B cell (primary cell): ENCODE measurements at regions of chr5 and their contacts with region 1.

Region 1: GRCh38 chr5:41270423-41271251 is 57.3 kb upstream of the C6 start:
- DNase-seq: no peak
- ATAC-seq: no peak
- H3K4me3 ChIP-seq: no peak overlapping the region
- H3K4me3 Mint-ChIP-seq: no peak overlapping the region
- H3K27ac ChIP-seq: no peak overlapping the region
- H3K27ac Mint-ChIP-seq: no peak overlapping the region
- H3K4me1 ChIP-seq: no peaks in the 10 kb centered on the region
- H3K4me1 Mint-ChIP-seq: no peaks in the 10 kb centered on the region
- H3K27me3 ChIP-seq: no peaks in the 10 kb centered on the region
- H3K27me3 Mint-ChIP-seq: no peaks in the 10 kb centered on the region
- CTCF ChIP-seq: peak; percentile 12

Region 2: GRCh38 chr5:41252036-41252435 is 18.6 kb before region 1 on chr5:
- CTCF ChIA-PET with region 1: no interaction called
- POLR2A ChIA-PET with region 1: no interaction called
- intact Hi-C with region 1: no loop called
- DNase-seq: no peak
- ATAC-seq: no peak
- H3K4me3 ChIP-seq: no peak overlapping the region
- H3K4me3 Mint-ChIP-seq: no peak overlapping the region
- H3K27ac ChIP-seq: no peak overlapping the region
- H3K27ac Mint-ChIP-seq: no peak overlapping the region
- H3K4me1 ChIP-seq: no peaks in the 10 kb centered on the region
- H3K4me1 Mint-ChIP-seq: no peaks in the 10 kb centered on the region
- H3K27me3 ChIP-seq: no peaks in the 10 kb centered on the region
- H3K27me3 Mint-ChIP-seq: no peaks in the 10 kb centered on the region
- CTCF ChIP-seq: no peak

Region 3: DNA sequence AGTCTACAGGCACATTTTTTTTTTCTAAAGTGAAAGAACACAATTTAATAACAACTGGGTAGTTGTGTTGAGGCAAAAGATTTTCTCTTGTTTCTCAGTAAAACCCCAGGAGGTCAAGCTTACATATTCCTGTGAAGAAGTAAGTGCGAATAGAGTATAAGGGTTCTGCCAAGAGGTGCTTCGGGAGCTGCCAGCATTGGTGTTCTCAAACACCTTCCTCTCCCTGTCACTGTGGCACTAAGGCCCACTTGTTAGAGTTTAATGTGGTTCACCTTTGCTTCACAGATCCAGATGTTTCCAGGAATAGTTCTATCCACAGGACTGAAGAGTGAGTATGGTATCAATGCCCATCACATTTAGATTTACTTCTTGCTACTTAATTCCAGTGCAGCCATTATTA is 34.4 kb after region 1 on chr5:
- CTCF ChIA-PET with region 1: no interaction called
- POLR2A ChIA-PET with region 1: no interaction called
- intact Hi-C with region 1: no loop called
- DNase-seq: no peak
- ATAC-seq: no peak
- H3K4me3 ChIP-seq: no peak overlapping the region
- H3K4me3 Mint-ChIP-seq: no peak overlapping the region
- H3K27ac ChIP-seq: no peak overlapping the region
- H3K27ac Mint-ChIP-seq: no peak overlapping the region
- H3K4me1 ChIP-seq: no peaks in the 10 kb centered on the region
- H3K4me1 Mint-ChIP-seq: no peaks in the 10 kb centered on the region
- H3K27me3 ChIP-seq: no peaks in the 10 kb centered on the region
- H3K27me3 Mint-ChIP-seq: no peaks in the 10 kb centered on the region
- CTCF ChIP-seq: no peak

Region 4: DNA sequence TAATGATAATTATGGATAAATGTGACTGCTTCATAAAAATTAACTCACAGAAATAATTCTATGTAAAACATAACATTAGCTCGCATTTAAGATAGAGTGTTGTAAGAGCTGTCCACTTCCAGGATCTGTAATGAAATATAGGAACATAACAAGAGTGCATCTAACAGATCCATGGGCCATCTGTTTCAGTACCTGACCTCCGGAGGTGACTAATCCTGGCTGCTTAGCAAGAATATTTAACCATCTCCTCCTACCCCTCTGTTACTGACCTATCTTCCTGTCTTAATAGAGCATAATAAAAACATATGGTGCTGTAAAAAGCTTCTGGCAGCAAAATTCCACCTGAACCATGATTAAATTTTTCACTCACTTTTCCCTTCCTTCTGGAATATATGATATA is 232.7 kb after region 1 on chr5:
- CTCF ChIA-PET with region 1: no interaction called
- POLR2A ChIA-PET with region 1: no interaction called
- intact Hi-C with region 1: no loop called
- DNase-seq: no peak
- ATAC-seq: no peak
- H3K4me3 ChIP-seq: no peak overlapping the region
- H3K4me3 Mint-ChIP-seq: no peak overlapping the region
- H3K27ac ChIP-seq: no peak overlapping the region
- H3K27ac Mint-ChIP-seq: no peak overlapping the region
- H3K4me1 ChIP-seq: no peaks in the 10 kb centered on the region
- H3K4me1 Mint-ChIP-seq: no peaks in the 10 kb centered on the region
- H3K27me3 ChIP-seq: no peaks in the 10 kb centered on the region
- H3K27me3 Mint-ChIP-seq: peaks cover 2% of the 10 kb centered on the region
- CTCF ChIP-seq: no peak

Region 5: DNA sequence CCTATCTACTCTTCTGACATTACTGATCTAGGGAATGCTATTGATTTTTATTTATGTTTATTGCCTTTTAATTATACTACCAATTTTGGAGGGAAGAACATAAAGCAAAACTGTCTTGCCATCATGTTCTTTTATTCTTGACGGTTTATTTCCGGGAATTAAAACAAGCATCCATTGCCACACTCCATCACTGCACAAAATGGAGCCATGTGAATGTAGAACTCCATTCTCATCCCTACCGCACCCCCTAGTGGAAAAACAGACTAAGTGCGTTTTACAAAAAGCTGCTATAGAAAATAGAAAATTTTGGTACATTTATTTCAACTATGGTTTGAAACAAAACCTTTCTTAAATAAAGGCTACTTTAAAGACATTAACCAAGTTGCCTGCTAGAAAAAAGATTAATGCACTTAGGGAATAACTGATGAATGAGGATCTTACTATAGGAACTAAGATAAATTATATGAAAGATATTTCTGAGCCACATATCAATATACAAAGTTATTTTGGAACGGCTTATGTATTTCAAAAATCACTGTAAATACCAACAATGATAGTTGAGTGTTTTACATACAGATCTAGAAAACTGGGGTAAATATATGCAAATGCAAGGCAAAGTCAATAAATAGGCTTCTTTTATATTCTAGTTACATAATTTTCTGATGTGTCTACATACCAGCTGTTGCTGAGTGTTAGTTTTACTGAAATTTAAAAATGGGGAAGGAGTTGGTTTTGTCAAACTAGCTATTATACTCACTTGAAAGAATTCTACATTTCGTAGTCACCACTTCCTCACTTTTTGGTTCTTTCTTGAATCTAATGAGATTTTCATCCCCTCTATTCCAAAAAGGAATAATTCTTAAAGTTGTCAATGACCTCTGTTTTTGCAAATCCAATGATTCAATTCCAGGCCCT is 573.1 kb after region 1 on chr5:
- CTCF ChIA-PET with region 1: no interaction called
- POLR2A ChIA-PET with region 1: no interaction called
- intact Hi-C with region 1: loop called (anchors 10 kb)
- DNase-seq: peak; percentile 35
- ATAC-seq: no peak
- H3K4me3 ChIP-seq: no peak overlapping the region
- H3K4me3 Mint-ChIP-seq: no peak overlapping the region
- H3K27ac ChIP-seq: no peak overlapping the region
- H3K27ac Mint-ChIP-seq: no peak overlapping the region
- H3K4me1 ChIP-seq: peaks cover 0 to 9% of the 10 kb centered on the region in 2 donors
- H3K4me1 Mint-ChIP-seq: no peaks in the 10 kb centered on the region
- H3K27me3 ChIP-seq: no peaks in the 10 kb centered on the region
- H3K27me3 Mint-ChIP-seq: no peaks in the 10 kb centered on the region
- CTCF ChIP-seq: peak; percentile 75